ENCODE measurements at regions of chr18 and their contacts with region 1.

Region 1: GRCh38 chr18:830315-830901 is 18.4 kb upstream of the YES1 start:
- DNase-seq: peak in 1 of 2 donors; percentile 70
- H3K4me3 ChIP-seq: no peak overlapping the region
- H3K27ac ChIP-seq: peak overlapping the region in 2 of 5 donors; percentile 20 to 21
- H3K4me1 ChIP-seq: peaks cover 0 to 14% (median 2%) of the 10 kb centered on the region in 4 donors
- H3K27me3 ChIP-seq: peaks cover 0 to 10% (median 4%) of the 10 kb centered on the region in 3 donors
- CTCF ChIP-seq: no peak
- EP300 ChIP-seq: no peak
- POLR2A ChIP-seq: no peak

Region 2: GRCh38 chr18:629269-630150 is 200.9 kb before region 1 on chr18:
- intact Hi-C with region 1: loop called (anchors 5 kb)
- DNase-seq: no peak
- H3K4me3 ChIP-seq: no peak overlapping the region
- H3K27ac ChIP-seq: no peak overlapping the region
- H3K4me1 ChIP-seq: no peaks in the 10 kb centered on the region
- H3K27me3 ChIP-seq: no peaks in the 10 kb centered on the region
- CTCF ChIP-seq: no peak
- EP300 ChIP-seq: no peak
- POLR2A ChIP-seq: no peak

Region 3: GRCh38 chr18:741931-742512 is 88.4 kb before region 1 on chr18:
- intact Hi-C with region 1: loop called (anchors 5 kb)
- DNase-seq: peak in 1 of 2 donors; percentile 70
- H3K4me3 ChIP-seq: no peak overlapping the region
- H3K27ac ChIP-seq: no peak overlapping the region
- H3K4me1 ChIP-seq: no peaks in the 10 kb centered on the region
- H3K27me3 ChIP-seq: no peaks in the 10 kb centered on the region
- CTCF ChIP-seq: peak in 5 of 7 experiments; percentile 65 to 79 (median 76)
- EP300 ChIP-seq: no peak
- POLR2A ChIP-seq: no peak